ENCODE measurements at regions of chr21 and their contacts with region 1.

Region 1: DNA sequence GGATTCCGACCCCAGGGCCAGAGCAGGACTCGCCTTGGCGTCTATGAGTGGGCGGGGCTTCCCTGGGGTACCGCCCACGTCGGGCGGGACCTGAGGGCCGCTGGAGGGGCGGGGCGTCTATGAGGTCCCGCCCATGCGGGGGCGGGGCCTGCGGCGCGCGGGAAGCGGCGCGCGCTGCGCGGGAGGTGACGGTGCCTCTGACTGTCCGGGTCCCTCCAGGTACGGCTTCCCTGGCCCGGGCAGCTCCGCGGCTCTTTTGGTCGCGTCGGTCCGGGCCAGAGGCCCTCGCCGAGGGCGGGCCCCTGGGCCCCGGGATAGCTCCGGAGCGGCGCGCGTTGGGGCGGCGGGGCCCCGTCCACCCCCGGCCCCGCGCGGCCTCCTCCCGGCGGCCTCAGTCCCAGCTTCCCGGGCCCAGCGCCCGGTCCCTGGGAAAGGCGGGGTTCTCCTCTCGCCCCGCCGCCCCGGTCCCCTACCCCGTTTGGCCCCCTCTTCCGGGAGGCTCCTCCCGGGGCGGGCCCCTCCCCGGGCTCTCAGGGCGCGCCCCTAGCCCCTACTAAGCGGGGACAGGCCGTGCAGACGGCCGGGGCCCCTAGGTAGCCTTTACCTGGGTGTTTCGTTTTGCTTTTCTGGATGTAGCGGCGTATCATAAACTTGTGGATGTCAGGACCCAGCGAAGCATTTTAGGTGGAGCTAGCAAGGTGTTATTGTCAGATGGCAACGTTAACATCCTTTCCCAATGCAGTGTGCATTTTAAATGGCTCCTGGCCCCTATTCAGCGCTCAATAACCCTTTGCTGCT is at the start of gene CHAF1B:
- DNase-seq: peak; percentile 88
- ATAC-seq: peak; percentile 97
- H3K4me3 Mint-ChIP-seq: peak within 1 kb of the TSS; percentile 83
- H3K27ac Mint-ChIP-seq: no peak within 1 kb of the TSS
- H3K4me1 Mint-ChIP-seq: peaks cover 6% of the 10 kb centered on the region
- H3K27me3 Mint-ChIP-seq: no peaks in the 10 kb centered on the region
- CTCF ChIP-seq: no peak
- total RNA-seq, gene CHAF1B: 5.6 and 6.2 TPM in 2 replicates

Region 2: GRCh38 chr21:36403713-36404112 is 18.3 kb after region 1 on chr21:
- CTCF ChIA-PET with region 1: no interaction called
- POLR2A ChIA-PET with region 1: interaction called, 12 read pairs
- intact Hi-C with region 1: no loop called
- DNase-seq: no peak
- ATAC-seq: no peak
- H3K4me3 Mint-ChIP-seq: no peak overlapping the region
- H3K27ac Mint-ChIP-seq: no peak overlapping the region
- H3K4me1 Mint-ChIP-seq: no peaks in the 10 kb centered on the region
- H3K27me3 Mint-ChIP-seq: no peaks in the 10 kb centered on the region
- CTCF ChIP-seq: no peak

Region 3: GRCh38 chr21:36429947-36430546 is 44.6 kb after region 1 on chr21:
- CTCF ChIA-PET with region 1: no interaction called
- POLR2A ChIA-PET with region 1: no interaction called
- intact Hi-C with region 1: loop called (anchors 2 kb)
- DNase-seq: peak; percentile 48
- ATAC-seq: peak; percentile 95
- H3K4me3 Mint-ChIP-seq: peak overlapping the region; percentile 81
- H3K27ac Mint-ChIP-seq: peak overlapping the region; percentile 92
- H3K4me1 Mint-ChIP-seq: peaks cover 18% of the 10 kb centered on the region
- H3K27me3 Mint-ChIP-seq: peaks cover 31% of the 10 kb centered on the region
- CTCF ChIP-seq: no peak

Region 4: DNA sequence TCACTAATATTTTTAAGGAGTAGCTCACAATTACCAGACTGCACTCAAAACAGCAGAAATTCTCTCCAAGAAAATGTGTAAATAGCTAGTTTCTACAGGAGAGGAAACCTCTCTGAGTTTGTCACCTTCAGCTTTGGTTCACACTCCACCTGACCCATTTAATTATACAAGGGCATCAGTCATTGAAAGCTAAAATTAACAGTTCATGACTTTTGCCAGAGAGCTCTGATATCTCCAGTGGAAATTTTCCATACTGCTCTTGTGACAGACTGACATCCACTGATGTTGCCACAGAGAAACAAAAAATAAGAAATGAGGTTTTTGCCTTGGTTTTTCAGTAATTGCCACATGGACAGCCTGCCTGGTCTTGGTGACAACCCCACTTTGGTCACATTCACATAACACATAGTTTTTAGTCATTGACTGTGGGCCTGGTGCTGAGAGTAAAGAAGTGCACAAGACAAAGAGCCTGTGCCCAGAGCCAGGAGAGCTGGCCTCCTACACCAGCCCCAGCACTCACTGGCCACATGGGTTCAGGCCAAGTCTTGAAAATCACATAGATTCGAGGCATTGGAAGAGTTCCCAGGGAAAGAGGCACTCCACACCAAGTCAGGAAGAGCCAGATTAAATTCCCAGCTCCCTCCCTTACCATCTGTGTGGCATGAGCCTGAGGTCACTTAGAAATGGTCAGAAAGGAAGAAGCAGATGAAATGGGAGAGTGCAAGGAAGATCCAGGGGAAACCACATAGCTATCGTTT is 299.7 kb after region 1 on chr21:
- CTCF ChIA-PET with region 1: no interaction called
- POLR2A ChIA-PET with region 1: no interaction called
- intact Hi-C with region 1: no loop called
- DNase-seq: no peak
- ATAC-seq: no peak
- H3K4me3 Mint-ChIP-seq: no peak overlapping the region
- H3K27ac Mint-ChIP-seq: no peak overlapping the region
- H3K4me1 Mint-ChIP-seq: no peaks in the 10 kb centered on the region
- H3K27me3 Mint-ChIP-seq: peaks cover 55% of the 10 kb centered on the region
- CTCF ChIP-seq: no peak